ENCODE measurements at regions of chr6 and their contacts with region 1.

Region 1: DNA sequence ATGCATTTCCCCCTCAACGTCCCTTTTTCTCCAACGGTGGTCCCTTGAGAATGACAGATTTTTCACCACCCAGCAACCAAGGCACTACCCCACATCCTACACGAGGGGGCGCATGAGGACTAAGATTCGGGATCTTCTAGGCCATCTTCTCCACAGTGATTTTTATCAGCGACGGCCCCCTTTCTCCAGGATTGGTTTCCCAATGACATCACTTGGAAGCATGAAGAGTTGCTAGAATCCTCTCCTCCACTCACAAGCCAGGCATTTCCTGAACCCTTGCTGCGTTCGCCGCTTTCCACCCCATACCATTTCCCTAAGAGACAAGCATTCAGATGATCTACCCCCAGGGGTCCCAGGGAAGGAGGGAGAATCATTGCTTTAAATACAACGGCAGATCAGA is 252.0 kb downstream of the HIVEP2 start:
- DNase-seq: no peak
- H3K4me3 ChIP-seq: no peak overlapping the region
- H3K27ac ChIP-seq: no peak overlapping the region
- H3K4me1 ChIP-seq: peaks cover 22% of the 10 kb centered on the region
- H3K27me3 ChIP-seq: no peaks in the 10 kb centered on the region
- CTCF ChIP-seq: peak; percentile 93 to 94 (median 93)
- POLR2A ChIP-seq: no peak

Region 2: DNA sequence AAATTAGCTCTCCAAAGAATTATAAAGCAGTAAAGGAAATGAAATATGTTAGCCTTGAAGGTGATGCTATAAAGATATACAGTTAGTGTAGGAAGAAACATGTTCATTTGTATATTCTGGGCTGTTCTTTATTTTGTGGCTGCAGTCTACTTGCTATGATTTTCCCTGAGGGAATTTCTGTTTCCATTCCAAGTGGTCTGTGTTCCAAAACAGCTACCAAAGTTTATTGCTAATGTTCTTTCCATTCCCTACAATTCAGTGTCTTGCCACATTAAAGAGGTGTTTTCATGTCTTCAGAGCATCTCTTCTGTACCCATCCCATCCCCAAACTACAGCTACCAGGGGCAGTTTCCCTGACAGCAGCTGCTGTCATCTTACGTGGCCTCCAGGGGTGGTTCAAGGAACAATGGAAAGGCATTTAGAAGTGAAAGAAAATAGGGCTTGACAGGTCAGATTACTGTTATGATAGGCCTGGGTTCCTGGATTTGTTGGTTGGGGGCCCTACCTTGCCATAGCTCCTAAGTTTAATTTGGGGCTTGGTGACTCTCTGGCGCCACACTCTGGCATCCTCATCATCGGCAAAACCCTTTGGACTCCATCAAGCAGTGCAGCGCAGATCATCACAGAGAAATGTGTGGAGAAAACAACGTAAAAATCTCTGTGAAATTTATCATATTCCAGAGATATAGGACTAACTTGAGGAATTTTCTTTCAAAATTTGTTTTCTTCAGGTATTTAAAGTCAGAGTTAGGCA is 333.9 kb after region 1 on chr6:
- intact Hi-C with region 1: loop called (anchors 5 kb)
- DNase-seq: no peak
- H3K4me3 ChIP-seq: no peak overlapping the region
- H3K27ac ChIP-seq: no peak overlapping the region
- H3K4me1 ChIP-seq: no peaks in the 10 kb centered on the region
- H3K27me3 ChIP-seq: no peaks in the 10 kb centered on the region
- CTCF ChIP-seq: peak in 2 of 3 experiments; percentile 24 to 38
- POLR2A ChIP-seq: no peak

Region 3: DNA sequence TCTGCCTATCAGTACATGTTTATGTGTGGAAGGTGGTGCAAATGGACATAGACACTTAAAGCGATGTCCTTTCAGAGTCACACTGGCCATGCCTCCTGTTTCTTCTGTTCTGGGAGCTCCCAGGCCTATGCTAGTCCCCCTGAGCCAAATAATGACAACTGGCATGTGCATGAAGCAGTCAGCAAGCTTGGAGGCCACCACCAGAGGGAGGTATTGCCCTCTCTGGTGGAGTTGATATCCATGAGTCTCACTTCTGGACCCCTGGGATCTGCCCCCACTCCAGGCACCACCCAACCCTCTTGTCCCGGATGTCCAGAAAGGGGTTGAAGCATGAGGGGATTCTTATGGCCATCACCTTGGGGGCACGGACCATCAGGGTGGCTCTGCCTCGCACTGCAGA is 539.9 kb after region 1 on chr6:
- intact Hi-C with region 1: loop called (anchors 10 kb)
- DNase-seq: no peak
- H3K4me3 ChIP-seq: no peak overlapping the region
- H3K27ac ChIP-seq: no peak overlapping the region
- H3K4me1 ChIP-seq: no peaks in the 10 kb centered on the region
- H3K27me3 ChIP-seq: no peaks in the 10 kb centered on the region
- CTCF ChIP-seq: no peak
- POLR2A ChIP-seq: no peak

Region 4: DNA sequence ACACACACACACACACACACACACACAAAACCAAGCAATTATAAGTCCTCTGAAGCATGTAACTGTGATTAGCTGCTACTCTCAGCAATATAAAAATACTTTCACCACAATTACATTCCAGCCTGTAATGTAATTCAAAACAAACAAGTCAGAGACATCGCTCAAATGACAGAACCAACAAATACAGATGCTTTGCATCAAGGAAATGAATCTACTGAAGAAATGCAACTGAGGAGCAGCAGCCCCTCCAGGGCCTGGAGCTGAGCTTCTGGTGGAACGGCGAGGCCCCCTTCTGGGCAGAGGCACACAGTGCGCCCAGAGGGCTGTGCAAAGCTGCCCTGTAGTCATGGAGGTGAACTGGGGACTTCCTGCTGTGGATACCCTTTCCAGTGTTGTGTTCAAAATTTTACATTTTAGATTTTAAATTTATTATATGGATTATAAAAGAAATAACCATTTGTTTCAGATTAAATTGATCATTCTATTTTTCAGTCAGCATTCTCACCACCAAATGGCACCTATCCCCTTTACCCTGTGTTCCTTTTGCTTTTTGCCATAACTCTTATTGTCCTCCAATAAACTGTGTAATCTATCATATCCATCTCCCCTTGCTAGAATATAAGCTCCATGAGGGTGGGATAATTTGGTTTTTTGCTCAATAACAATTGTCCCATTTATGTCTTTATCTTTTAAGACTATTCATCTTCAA is 734.3 kb after region 1 on chr6:
- intact Hi-C with region 1: loop called (anchors 5 kb)
- DNase-seq: no peak
- H3K4me3 ChIP-seq: no peak overlapping the region
- H3K27ac ChIP-seq: no peak overlapping the region
- H3K4me1 ChIP-seq: no peaks in the 10 kb centered on the region
- H3K27me3 ChIP-seq: no peaks in the 10 kb centered on the region
- CTCF ChIP-seq: peak; percentile 76 to 86 (median 85)
- POLR2A ChIP-seq: no peak

Measured in vagina (tissue), 2 donors.